CD8-positive, alpha-beta T cell (primary cell): ENCODE measurements at regions of chr3 and their contacts with region 1.

Region 1: DNA sequence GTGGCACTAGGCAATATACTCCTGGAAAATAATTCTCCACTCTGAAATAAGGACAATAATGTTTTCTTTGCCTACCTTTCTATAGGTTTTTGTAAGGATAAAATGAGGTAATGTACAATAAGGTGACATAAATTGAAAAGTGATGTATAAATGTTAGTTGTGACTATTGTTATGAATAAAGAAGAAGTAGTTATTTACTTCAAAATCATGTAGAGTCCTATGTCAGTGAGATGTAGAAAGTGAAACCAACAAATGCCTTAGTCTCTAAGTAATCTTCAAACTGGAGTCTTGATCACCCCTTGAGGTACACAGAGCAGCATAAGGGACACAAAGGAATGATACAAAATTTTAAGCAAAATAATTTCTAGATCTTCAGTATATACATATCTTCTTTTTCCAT is 60.3 kb upstream of the TP63 start:
- DNase-seq: peak in 1 of 9 experiments; percentile 11
- ATAC-seq: no peak
- H3K4me3 ChIP-seq: no peak overlapping the region
- H3K4me3 Mint-ChIP-seq: peak overlapping the region; percentile 27
- H3K27ac ChIP-seq: no peak overlapping the region
- H3K27ac Mint-ChIP-seq: peak overlapping the region; percentile 30
- H3K4me1 ChIP-seq: peaks cover 3% of the 10 kb centered on the region
- H3K4me1 Mint-ChIP-seq: peaks cover 9% of the 10 kb centered on the region
- H3K27me3 ChIP-seq: no peaks in the 10 kb centered on the region
- H3K27me3 Mint-ChIP-seq: no peaks in the 10 kb centered on the region
- CTCF ChIP-seq: no peak

Region 2: DNA sequence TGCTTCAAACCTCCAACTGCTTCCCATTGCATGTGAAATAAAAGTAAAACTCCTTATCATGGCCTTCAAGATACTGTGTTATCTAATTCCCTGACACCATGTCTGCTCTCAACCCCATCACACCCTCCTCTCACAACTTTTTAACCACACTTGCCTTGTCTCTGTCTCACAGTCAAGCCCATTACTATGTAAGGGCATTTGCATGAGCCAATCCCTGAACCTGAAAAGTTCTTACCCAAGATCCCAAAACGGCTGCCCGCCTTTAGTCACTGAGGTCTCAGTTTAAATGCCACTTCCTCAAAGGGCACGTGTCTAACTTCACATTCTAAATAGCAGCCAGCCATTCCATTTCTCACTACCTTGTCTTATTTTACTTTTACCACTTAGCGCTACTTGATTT is 1983.8 kb before region 1 on chr3:
- CTCF ChIA-PET with region 1: no interaction called
- POLR2A ChIA-PET with region 1: no interaction called
- intact Hi-C with region 1: loop called in 1 of 2 experiments (anchors 10 kb)
- DNase-seq: no peak
- ATAC-seq: no peak
- H3K4me3 ChIP-seq: no peak overlapping the region
- H3K4me3 Mint-ChIP-seq: no peak overlapping the region
- H3K27ac ChIP-seq: no peak overlapping the region
- H3K27ac Mint-ChIP-seq: no peak overlapping the region
- H3K4me1 ChIP-seq: no peaks in the 10 kb centered on the region
- H3K4me1 Mint-ChIP-seq: no peaks in the 10 kb centered on the region
- H3K27me3 ChIP-seq: no peaks in the 10 kb centered on the region
- H3K27me3 Mint-ChIP-seq: peaks cover 37% of the 10 kb centered on the region
- CTCF ChIP-seq: no peak

Region 3: GRCh38 chr3:189724356-189724755 is 153.4 kb after region 1 on chr3:
- CTCF ChIA-PET with region 1: no interaction called
- POLR2A ChIA-PET with region 1: no interaction called
- intact Hi-C with region 1: no loop called
- DNase-seq: no peak
- ATAC-seq: no peak
- H3K4me3 ChIP-seq: no peak overlapping the region
- H3K4me3 Mint-ChIP-seq: no peak overlapping the region
- H3K27ac ChIP-seq: no peak overlapping the region
- H3K27ac Mint-ChIP-seq: no peak overlapping the region
- H3K4me1 ChIP-seq: no peaks in the 10 kb centered on the region
- H3K4me1 Mint-ChIP-seq: no peaks in the 10 kb centered on the region
- H3K27me3 ChIP-seq: no peaks in the 10 kb centered on the region
- H3K27me3 Mint-ChIP-seq: no peaks in the 10 kb centered on the region
- CTCF ChIP-seq: no peak